ENCODE measurements at regions of chr1 and their contacts with region 1.

Region 1: GRCh38 chr1:23591460-23592208 is 32.3 kb upstream of the ID3 start:
- DNase-seq: peak; percentile 62
- ATAC-seq: peak; percentile 85
- H3K4me3 ChIP-seq: peak overlapping the region in 1 of 5 experiments; percentile 31
- H3K4me3 Mint-ChIP-seq: peak overlapping the region; percentile 81
- H3K27ac ChIP-seq: peak overlapping the region; percentile 81 to 83
- H3K27ac Mint-ChIP-seq: peak overlapping the region; percentile 96
- H3K4me1 ChIP-seq: peaks cover 84 to 85% of the 10 kb centered on the region in 2 donors
- H3K4me1 Mint-ChIP-seq: peaks cover 86% of the 10 kb centered on the region
- H3K27me3 ChIP-seq: no peaks in the 10 kb centered on the region
- H3K27me3 Mint-ChIP-seq: no peaks in the 10 kb centered on the region
- CTCF ChIP-seq: no peak

Region 2: DNA sequence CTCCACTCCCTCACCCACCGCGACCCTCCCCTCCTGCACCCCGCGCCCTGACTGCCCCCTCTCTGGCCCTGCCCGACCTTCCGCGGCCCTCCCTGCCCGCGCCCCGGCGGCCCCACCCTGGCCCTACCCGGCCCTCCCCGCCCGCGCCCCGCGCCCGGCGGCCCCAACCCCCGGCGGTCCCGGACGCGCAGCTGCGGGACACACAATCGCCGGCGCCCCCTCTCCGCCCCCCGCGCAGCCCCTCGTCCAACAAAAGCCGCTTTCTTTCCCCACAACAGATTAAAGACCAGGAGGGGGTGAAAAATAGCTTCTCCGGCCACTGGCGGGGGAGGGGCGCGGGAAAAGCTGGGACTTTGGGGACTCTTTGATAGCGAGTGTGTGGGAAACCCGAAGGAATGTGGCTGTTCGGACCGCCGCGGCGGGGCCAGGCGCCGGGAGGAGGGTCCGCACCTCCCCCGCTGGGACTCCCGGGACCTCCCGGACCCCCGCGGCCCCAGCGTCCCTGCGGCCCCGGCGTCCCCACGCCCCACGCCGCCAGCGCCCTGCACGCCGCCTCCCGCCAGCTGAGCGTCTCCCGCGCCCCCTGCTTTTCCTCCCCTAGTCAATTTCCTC is 23.5 kb before region 1 on chr1:
- CTCF ChIA-PET with region 1: interaction called, 227 read pairs
- POLR2A ChIA-PET with region 1: interaction called, 112 read pairs
- intact Hi-C with region 1: no loop called
- DNase-seq: no peak
- ATAC-seq: peak; percentile 28
- H3K4me3 ChIP-seq: peak overlapping the region; percentile 30 to 88 (median 69)
- H3K4me3 Mint-ChIP-seq: peak overlapping the region; percentile 93
- H3K27ac ChIP-seq: peak overlapping the region; percentile 49 to 69
- H3K27ac Mint-ChIP-seq: peak overlapping the region; percentile 95
- H3K4me1 ChIP-seq: peaks cover 37 to 40% of the 10 kb centered on the region in 2 donors
- H3K4me1 Mint-ChIP-seq: peaks cover 54% of the 10 kb centered on the region
- H3K27me3 ChIP-seq: no peaks in the 10 kb centered on the region
- H3K27me3 Mint-ChIP-seq: no peaks in the 10 kb centered on the region
- CTCF ChIP-seq: no peak

Region 3: DNA sequence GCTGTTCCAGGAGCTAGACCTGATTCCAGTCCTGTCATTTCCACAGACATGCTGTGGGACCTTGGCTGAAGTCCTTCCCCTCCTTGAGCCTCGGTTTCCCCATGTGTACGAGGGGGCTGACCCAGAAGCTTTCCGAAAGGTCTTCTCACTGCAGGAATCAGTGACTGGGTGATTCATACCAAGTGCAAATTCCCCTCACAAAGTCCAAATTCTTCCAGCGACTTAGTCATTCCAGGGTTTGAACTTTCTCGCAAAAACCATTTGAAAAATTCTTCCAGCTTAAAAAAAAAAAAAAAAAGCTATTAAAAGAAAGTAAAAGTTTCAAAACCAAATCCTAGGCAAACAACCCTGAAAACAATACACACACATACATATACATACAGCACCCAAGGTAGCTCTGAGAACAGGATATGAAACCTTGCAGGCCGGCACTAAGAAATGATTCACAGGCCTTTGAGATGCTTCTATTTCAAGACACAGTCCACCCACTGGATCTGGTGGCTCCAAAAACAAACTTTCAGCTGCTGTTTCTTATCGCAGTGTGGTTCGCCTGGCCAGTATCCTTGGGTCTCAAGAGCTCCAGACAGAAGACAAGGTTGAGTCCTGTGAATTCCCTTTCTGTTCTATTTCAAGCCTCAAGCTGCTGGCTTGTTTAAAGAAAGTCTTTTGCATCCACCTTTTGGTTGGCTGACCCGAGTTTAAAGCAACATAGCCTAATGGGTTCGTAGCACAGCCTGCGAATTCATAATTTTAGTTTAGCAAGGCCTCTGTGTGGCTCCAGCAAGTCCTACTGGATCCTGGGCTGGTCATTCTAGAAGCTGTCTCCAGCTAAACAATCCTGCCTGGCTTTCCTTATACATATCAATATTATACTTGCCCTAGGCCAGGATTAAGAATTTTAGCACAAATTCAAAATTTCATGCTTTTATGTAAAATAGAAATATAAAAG is 14.3 kb before region 1 on chr1:
- CTCF ChIA-PET with region 1: interaction called, 227 read pairs
- POLR2A ChIA-PET with region 1: interaction called, 112 read pairs
- intact Hi-C with region 1: loop called (anchors 1 kb)
- DNase-seq: peak; percentile 80
- ATAC-seq: peak; percentile 85
- H3K4me3 ChIP-seq: peak overlapping the region in 4 of 5 experiments; percentile 13 to 53 (median 20)
- H3K4me3 Mint-ChIP-seq: peak overlapping the region; percentile 83
- H3K27ac ChIP-seq: peak overlapping the region; percentile 75 to 83
- H3K27ac Mint-ChIP-seq: peak overlapping the region; percentile 98
- H3K4me1 ChIP-seq: peaks cover 78 to 85% of the 10 kb centered on the region in 2 donors
- H3K4me1 Mint-ChIP-seq: peaks cover 85% of the 10 kb centered on the region
- H3K27me3 ChIP-seq: no peaks in the 10 kb centered on the region
- H3K27me3 Mint-ChIP-seq: no peaks in the 10 kb centered on the region
- CTCF ChIP-seq: no peak

Region 4: GRCh38 chr1:23607947-23608346 is 16.3 kb after region 1 on chr1:
- CTCF ChIA-PET with region 1: interaction called, 15 read pairs
- POLR2A ChIA-PET with region 1: interaction called, 52 read pairs
- intact Hi-C with region 1: loop called (anchors 1 kb)
- DNase-seq: no peak
- ATAC-seq: no peak
- H3K4me3 ChIP-seq: no peak overlapping the region
- H3K4me3 Mint-ChIP-seq: no peak overlapping the region
- H3K27ac ChIP-seq: peak overlapping the region in 1 of 2 donors; percentile 7
- H3K27ac Mint-ChIP-seq: peak overlapping the region; percentile 81
- H3K4me1 ChIP-seq: peaks cover 44 to 53% of the 10 kb centered on the region in 2 donors
- H3K4me1 Mint-ChIP-seq: peaks cover 59% of the 10 kb centered on the region
- H3K27me3 ChIP-seq: no peaks in the 10 kb centered on the region
- H3K27me3 Mint-ChIP-seq: no peaks in the 10 kb centered on the region
- CTCF ChIP-seq: no peak

Region 5: GRCh38 chr1:23613191-23614031 is 21.8 kb after region 1 on chr1:
- CTCF ChIA-PET with region 1: interaction called, 51 read pairs
- POLR2A ChIA-PET with region 1: interaction called, 60 read pairs
- intact Hi-C with region 1: loop called (anchors 1 kb)
- DNase-seq: peak; percentile 62
- ATAC-seq: peak; percentile 52
- H3K4me3 ChIP-seq: no peak overlapping the region
- H3K4me3 Mint-ChIP-seq: peak overlapping the region; percentile 75
- H3K27ac ChIP-seq: peak overlapping the region; percentile 76 to 88
- H3K27ac Mint-ChIP-seq: peak overlapping the region; percentile 86
- H3K4me1 ChIP-seq: peaks cover 62 to 76% of the 10 kb centered on the region in 2 donors
- H3K4me1 Mint-ChIP-seq: peaks cover 79% of the 10 kb centered on the region
- H3K27me3 ChIP-seq: no peaks in the 10 kb centered on the region
- H3K27me3 Mint-ChIP-seq: no peaks in the 10 kb centered on the region
- CTCF ChIP-seq: no peak

Region 6: GRCh38 chr1:23619299-23620188 is 27.9 kb after region 1 on chr1:
- CTCF ChIA-PET with region 1: interaction called, 51 read pairs
- POLR2A ChIA-PET with region 1: interaction called, 60 read pairs
- intact Hi-C with region 1: loop called (anchors 1 kb)
- DNase-seq: peak; percentile 89
- ATAC-seq: peak; percentile 88
- H3K4me3 ChIP-seq: peak overlapping the region in 4 of 5 experiments; percentile 29 to 59 (median 50)
- H3K4me3 Mint-ChIP-seq: peak overlapping the region; percentile 82
- H3K27ac ChIP-seq: peak overlapping the region; percentile 93 to 94
- H3K27ac Mint-ChIP-seq: peak overlapping the region; percentile 98
- H3K4me1 ChIP-seq: peaks cover 77 to 93% of the 10 kb centered on the region in 2 donors
- H3K4me1 Mint-ChIP-seq: peaks cover 87% of the 10 kb centered on the region
- H3K27me3 ChIP-seq: no peaks in the 10 kb centered on the region
- H3K27me3 Mint-ChIP-seq: no peaks in the 10 kb centered on the region
- CTCF ChIP-seq: no peak

Region 7: DNA sequence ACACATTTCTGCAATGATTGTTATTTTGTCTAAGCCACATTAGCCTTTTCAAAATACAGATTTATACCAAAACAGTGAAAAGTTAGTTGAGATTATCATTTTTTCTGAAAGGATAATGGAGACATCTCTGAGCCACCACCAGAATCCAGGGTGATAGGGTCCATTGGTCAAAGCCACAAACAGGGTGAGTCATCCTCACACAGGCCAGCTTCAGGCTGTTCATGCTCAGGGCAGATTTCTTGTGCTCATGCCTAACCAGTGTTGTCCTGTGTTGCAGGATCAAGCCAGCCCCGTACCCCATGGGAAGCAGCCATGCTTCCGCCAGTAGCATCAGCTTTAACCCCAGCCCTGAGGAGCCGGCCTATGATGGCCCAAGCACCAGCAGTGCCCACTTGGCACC is 165.0 kb after region 1 on chr1:
- CTCF ChIA-PET with region 1: no interaction called
- POLR2A ChIA-PET with region 1: no interaction called
- intact Hi-C with region 1: no loop called
- DNase-seq: no peak
- ATAC-seq: no peak
- H3K4me3 ChIP-seq: no peak overlapping the region
- H3K4me3 Mint-ChIP-seq: no peak overlapping the region
- H3K27ac ChIP-seq: no peak overlapping the region
- H3K27ac Mint-ChIP-seq: peak overlapping the region; percentile 26
- H3K4me1 ChIP-seq: no peaks in the 10 kb centered on the region
- H3K4me1 Mint-ChIP-seq: peaks cover 3% of the 10 kb centered on the region
- H3K27me3 ChIP-seq: no peaks in the 10 kb centered on the region
- H3K27me3 Mint-ChIP-seq: no peaks in the 10 kb centered on the region
- CTCF ChIP-seq: no peak